Heart right ventricle (tissue), 16 donors: ENCODE measurements at regions of chr20 and their contacts with region 1.

Region 1: DNA sequence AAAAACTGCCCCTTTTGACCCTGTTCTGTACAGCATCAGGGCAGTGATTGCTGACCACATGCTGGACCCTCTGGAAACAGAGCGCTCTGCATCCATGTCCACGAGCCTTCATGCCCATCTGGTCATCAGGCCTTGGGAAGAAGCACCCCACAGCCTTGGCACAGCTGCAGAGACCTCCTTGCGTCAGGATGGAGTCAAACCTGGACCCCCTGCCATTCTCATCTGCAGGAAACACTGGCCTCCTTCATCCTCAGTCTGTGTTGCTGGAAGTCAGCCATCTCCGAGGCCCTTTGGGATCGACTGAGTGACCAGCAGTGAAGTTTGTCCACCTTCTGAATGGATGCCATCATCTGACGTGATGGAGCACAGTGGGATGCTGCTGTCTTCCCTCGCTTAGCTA is 2138.3 kb upstream of the DEFB115 start:
- DNase-seq: no peak
- ATAC-seq: no peak
- H3K4me3 ChIP-seq: no peak overlapping the region
- H3K27ac ChIP-seq: no peak overlapping the region
- H3K4me1 ChIP-seq: no peaks in the 10 kb centered on the region
- H3K27me3 ChIP-seq: no peaks in the 10 kb centered on the region
- CTCF ChIP-seq: no peak

Region 2: DNA sequence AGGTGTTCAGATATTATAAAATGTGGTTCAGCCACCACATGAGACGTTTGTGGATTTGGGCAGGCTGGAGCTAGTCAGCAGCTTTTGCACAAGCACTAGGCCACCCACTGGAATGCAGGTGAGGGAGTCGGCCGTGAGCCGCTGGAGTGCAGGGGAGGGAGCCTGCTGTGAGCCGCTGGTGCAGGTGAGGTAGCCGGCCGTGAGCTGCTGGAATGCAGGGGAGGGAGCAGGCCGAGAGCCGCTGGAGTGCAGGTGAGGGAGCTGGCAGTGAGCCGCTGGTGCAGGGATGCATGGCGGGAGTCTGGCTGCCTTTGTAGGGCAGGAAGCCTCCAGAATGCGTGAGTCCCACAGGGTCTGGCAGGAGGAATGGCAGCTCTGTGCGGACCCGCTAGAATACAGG is 230.7 kb after region 1 on chr20:
- intact Hi-C with region 1: no loop called
- DNase-seq: no peak
- ATAC-seq: no peak
- H3K4me3 ChIP-seq: no peak overlapping the region
- H3K27ac ChIP-seq: no peak overlapping the region
- H3K4me1 ChIP-seq: no peaks in the 10 kb centered on the region
- H3K27me3 ChIP-seq: no peaks in the 10 kb centered on the region
- CTCF ChIP-seq: no peak

Region 3: DNA sequence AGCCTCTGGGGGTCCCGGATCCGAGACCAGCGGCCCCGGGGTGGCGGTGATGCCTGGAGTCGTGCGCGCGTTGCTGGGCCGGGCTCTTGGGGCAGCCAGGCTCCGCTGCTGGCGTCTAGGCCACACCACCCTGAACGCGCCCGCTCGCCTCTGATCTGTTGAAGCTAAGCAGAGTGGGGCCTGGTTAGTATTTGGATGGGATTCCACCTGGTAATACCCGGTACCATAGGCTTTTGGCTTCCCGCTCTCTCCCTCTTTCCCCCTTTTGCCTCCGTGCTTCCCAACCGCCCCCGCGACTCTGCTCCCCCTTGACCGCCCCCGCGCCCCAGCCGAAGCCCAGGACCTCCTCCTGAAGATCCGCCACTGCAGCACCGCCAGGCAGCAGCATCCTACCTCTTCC is 754.8 kb after region 1 on chr20:
- intact Hi-C with region 1: loop called in 2 of 10 experiments (anchors 10 kb)
- DNase-seq: peak in 1 of 2 donors; percentile 55
- ATAC-seq: no peak
- H3K4me3 ChIP-seq: no peak overlapping the region
- H3K27ac ChIP-seq: no peak overlapping the region
- H3K4me1 ChIP-seq: no peaks in the 10 kb centered on the region
- H3K27me3 ChIP-seq: peaks cover 0 to 6% (median 0%) of the 10 kb centered on the region in 7 donors
- CTCF ChIP-seq: no peak